ENCODE measurements at regions of chr9 and their contacts with region 1.

Region 1: DNA sequence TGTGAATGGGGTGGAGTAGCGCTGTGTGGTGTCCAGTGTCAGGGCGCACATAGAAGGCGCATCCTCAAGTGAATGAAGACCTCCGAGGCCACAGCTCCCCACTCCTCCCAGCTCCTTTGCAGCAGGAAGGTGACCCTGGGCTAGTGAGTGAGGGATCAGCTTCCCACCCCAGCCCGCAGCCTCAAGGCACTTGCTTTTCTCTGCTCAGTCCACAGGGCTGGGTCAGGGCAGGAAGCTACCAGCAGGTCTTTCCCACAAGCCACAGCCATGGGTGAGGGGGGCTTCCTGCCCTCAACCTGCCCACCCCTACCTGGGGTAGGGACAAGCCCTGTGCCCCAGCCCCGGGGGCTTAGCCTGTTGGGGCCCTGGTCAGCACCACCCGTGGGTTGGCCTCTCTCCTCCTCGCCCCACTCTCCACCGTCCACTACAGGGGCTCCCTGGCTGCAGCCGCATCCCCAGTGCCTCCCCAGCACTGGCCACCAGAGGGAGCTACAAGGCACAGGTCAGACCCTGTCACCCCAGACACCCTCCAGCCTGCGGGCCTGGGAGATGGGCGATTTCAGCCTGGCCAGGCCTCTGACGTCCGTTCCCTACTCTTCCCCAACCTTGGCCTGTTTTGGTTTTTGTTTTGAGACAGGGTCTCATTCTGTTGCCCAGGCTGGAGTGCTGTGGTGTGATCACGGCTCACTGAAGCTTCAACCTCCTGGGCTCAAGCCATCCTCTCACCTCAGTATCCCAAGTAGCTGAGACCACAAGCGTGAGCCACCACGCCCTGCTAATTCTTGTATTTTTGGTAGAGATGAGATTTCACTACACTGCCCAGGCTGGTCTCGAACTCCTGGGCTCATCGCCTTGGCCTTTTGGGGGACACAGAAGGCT is 1.3 kb upstream of the ABCA2 start:
- DNase-seq: peak; percentile 82
- H3K4me3 Mint-ChIP-seq: peak overlapping the region; percentile 56
- H3K27ac Mint-ChIP-seq: no peak overlapping the region
- H3K4me1 Mint-ChIP-seq: peaks cover 34% of the 10 kb centered on the region
- H3K27me3 Mint-ChIP-seq: peaks cover 5% of the 10 kb centered on the region

Region 2: DNA sequence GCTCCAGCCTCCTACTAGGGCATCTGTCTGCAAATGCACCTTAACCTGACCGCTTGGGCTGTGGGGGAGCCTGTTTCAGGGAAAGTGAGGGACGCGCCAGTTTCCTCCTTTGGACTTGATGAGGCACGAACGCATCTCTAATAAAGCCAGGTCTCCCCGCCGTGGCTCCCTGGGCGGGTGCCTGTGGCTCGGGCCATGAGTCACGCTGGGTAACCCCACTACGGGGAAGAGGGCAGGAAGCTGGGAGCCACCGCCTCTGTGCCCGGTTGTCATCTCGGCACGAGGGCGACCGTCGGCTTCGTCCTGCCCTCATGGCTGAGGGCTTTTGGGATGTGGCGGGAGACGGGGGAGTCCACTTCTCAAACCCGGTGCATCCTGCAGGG is 495.5 kb before region 1 on chr9:
- CTCF ChIA-PET with region 1: no interaction called
- intact Hi-C with region 1: loop called (anchors 5 kb)
- DNase-seq: peak; percentile 94
- H3K4me3 Mint-ChIP-seq: peak overlapping the region; percentile 57
- H3K27ac Mint-ChIP-seq: peak overlapping the region; percentile 91
- H3K4me1 Mint-ChIP-seq: peaks cover 73% of the 10 kb centered on the region
- H3K27me3 Mint-ChIP-seq: no peaks in the 10 kb centered on the region

Region 3: DNA sequence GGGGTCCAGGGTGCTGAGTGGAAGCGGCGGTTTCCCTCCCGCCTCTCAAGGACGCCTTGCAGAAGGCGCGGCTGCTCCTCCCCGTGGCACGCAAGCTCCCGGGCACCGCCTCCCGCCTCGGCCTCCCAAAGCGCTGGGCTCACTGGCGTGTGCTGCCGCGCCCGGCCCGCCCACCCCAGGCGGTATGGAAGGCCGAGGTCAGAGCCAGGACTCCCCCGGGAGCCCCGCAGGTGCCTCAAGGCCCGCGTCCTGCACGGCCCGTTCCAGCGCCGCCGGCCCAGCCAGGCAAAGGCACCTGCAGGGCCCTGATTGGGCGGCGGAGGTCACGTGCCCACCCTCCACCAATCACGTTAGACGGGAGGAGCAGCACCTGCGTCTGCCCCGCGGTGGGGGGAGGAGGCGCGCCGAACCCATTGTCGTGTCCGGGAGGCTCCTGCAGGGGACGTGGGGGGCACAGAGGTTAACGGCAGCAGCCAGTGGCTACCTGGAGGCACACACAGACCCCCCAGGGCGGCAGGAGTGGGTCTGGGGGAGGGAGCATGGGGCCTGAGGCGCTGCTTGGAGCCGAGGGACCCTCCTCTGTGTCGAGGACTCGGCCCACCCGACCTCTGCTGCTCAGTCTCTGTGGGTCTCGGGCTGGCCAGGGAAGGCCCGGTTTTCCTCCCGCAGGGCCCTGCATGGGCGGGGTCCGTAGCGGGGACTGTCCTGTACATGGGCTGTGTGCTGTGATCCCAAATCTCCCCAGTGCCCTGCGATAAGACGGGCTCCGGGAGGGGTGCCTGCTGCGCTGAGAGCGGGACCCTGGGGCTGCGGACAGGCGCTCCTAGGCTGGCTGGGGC is 79.3 kb before region 1 on chr9:
- CTCF ChIA-PET with region 1: interaction called, 30 read pairs
- intact Hi-C with region 1: no loop called
- DNase-seq: peak; percentile 98
- H3K4me3 Mint-ChIP-seq: peak overlapping the region; percentile 82
- H3K27ac Mint-ChIP-seq: peak overlapping the region; percentile 72
- H3K4me1 Mint-ChIP-seq: peaks cover under 1% of the 10 kb centered on the region
- H3K27me3 Mint-ChIP-seq: no peaks in the 10 kb centered on the region

Region 4: DNA sequence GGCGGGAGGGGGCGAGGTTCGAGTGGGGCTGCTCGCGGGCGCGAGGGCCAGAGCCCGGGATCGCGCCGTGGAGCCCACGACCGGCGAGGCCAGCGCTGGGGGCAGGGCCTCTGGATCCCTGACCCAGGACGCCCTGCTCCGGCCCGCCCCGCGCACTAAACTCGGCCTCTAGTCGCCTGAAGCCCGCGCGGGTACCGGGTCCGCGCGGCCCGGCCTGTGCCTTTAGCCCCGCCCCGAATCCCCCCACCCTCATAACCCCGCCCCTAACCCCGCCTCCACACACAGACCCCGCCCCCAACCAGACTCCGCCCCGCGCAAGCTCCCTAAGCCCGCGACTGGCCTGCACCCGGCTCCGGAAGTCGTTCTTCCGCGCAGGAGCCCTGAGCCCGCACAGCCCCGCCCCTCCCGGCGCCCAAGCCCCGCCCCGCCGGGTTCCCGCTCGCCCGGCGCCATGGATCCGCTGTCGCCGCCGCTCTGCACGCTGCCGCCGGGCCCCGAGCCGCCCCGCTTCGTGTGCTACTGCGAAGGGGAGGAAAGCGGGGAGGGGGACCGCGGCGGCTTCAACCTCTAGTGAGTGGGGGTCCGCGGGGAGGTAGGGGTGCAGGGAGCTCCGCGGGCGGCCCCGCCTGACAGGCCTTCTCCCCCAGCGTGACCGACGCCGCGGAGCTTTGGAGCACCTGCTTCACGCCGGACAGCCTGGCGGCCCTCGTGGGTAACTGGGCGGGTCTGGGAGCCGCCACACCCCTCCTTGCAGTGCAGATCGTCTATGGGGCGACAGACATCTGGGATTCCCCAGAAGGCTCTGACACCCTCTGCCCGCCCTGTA is 37.1 kb before region 1 on chr9 and contains the start of gene PAXX:
- CTCF ChIA-PET with region 1: interaction called, 15 read pairs
- intact Hi-C with region 1: no loop called
- DNase-seq: peak; percentile 95
- H3K4me3 Mint-ChIP-seq: peak within 1 kb of the TSS; percentile 83
- H3K27ac Mint-ChIP-seq: peak within 1 kb of the TSS; percentile 81
- H3K4me1 Mint-ChIP-seq: peaks cover 16% of the 10 kb centered on the region
- H3K27me3 Mint-ChIP-seq: peaks cover under 1% of the 10 kb centered on the region
- total RNA-seq, gene PAXX: 75.9 to 76.8 TPM

Region 5: GRCh38 chr9:137000177-137000883 is 29.0 kb before region 1 on chr9:
- CTCF ChIA-PET with region 1: interaction called, 15 read pairs
- intact Hi-C with region 1: loop called (anchors 2 kb)
- DNase-seq: no peak
- H3K4me3 Mint-ChIP-seq: no peak overlapping the region
- H3K27ac Mint-ChIP-seq: no peak overlapping the region
- H3K4me1 Mint-ChIP-seq: peaks cover 13% of the 10 kb centered on the region
- H3K27me3 Mint-ChIP-seq: peaks cover 13% of the 10 kb centered on the region

Region 6: GRCh38 chr9:137070201-137070905 is 41.1 kb after region 1 on chr9 and contains the start of gene SAPCD2:
- CTCF ChIA-PET with region 1: interaction called, 66 read pairs
- intact Hi-C with region 1: loop called (anchors 5 kb)
- DNase-seq: peak; percentile 86
- H3K4me3 Mint-ChIP-seq: peak within 1 kb of the TSS; percentile 56
- H3K27ac Mint-ChIP-seq: peak within 1 kb of the TSS; percentile 40
- H3K4me1 Mint-ChIP-seq: peaks cover 9% of the 10 kb centered on the region
- H3K27me3 Mint-ChIP-seq: peaks cover 3% of the 10 kb centered on the region
- total RNA-seq, gene SAPCD2: 3.8 to 3.9 TPM

Region 7: DNA sequence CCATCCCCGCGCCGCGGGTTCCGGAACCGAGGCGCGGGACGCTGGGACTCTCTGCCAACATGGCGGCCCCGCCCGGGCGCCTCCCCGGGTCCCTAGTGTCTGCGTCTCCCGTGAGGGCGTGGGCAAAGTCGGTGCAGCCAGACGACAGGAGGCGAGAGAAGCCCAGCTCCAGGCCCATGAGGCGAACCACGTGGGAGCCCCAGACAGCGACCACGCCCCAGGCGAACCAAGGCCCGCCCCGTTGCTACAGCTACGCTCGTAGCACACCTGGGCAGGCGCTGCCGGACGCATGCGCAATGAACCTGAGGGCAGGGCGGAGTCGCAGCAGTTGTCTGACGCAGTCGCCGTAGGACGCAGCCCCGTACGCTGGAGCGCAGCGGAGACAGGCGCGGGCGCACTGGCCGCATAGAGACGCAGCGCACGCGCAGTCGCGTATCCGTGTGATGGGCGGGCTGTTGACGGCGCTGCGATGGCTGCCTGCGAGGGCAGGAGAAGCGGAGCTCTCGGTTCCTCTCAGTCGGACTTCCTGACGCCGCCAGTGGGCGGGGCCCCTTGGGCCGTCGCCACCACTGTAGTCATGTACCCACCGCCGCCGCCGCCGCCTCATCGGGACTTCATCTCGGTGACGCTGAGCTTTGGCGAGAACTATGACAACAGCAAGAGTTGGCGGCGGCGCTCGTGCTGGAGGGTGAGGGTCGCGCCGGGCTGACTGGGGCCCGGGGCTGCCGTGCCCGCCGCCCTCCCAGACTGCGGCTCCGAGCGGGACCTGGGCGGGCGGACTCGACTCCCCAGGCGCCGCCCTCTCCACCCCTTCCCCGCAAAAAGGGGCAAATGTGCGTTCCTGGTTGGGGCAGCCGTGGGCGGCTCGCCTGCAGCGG is 57.5 kb after region 1 on chr9 and contains the start of gene MAN1B1:
- CTCF ChIA-PET with region 1: interaction called, 10 read pairs
- intact Hi-C with region 1: no loop called
- DNase-seq: peak; percentile 100
- H3K4me3 Mint-ChIP-seq: peak within 1 kb of the TSS; percentile 89
- H3K27ac Mint-ChIP-seq: peak within 1 kb of the TSS; percentile 89
- H3K4me1 Mint-ChIP-seq: peaks cover 36% of the 10 kb centered on the region
- H3K27me3 Mint-ChIP-seq: no peaks in the 10 kb centered on the region
- total RNA-seq, gene MAN1B1: 18.7 to 18.9 TPM

Region 8: DNA sequence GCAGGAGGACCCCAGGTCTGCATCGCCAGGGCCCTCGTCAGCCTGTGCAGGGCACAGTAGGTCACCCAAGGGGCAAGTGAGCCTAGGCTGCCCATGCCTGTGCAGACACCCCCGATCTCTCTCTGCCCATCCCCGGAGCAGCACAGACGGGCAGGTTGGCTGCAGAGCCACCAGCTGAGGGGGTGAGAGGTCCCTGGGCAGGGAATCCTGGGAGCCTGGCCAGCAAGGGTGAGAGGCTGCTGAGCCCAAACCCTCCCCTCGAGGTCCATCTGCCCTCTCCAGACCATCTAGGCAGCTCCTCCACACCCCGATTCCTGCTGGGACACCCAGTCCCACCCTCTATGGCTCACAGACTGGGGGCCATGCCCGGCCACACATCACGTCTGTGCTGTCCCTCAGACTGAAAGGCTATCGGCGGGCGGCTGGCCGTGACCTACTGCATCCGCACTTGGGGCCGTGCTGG is 88.0 kb after region 1 on chr9:
- CTCF ChIA-PET with region 1: no interaction called
- intact Hi-C with region 1: no loop called
- DNase-seq: no peak
- H3K4me3 Mint-ChIP-seq: no peak overlapping the region
- H3K27ac Mint-ChIP-seq: no peak overlapping the region
- H3K4me1 Mint-ChIP-seq: peaks cover 14% of the 10 kb centered on the region
- H3K27me3 Mint-ChIP-seq: no peaks in the 10 kb centered on the region

Measured in activated naive CD4-positive, alpha-beta T cell treated with anti-CD3 and anti-CD28 coated beads for 36 hours (primary cell).